GM10248 (cell line): ENCODE measurements at regions of chr7 and their contacts with region 1.

Region 1: GRCh38 chr7:69768986-69769571 is 170.8 kb downstream of the AUTS2 start:
- DNase-seq: no peak
- CTCF ChIP-seq: no peak

Region 2: GRCh38 chr7:69780377-69780776 is 11.3 kb after region 1 on chr7:
- CTCF ChIA-PET with region 1: interaction called, 14 read pairs
- POLR2A ChIA-PET with region 1: no interaction called
- DNase-seq: no peak
- CTCF ChIP-seq: no peak

Region 3: DNA sequence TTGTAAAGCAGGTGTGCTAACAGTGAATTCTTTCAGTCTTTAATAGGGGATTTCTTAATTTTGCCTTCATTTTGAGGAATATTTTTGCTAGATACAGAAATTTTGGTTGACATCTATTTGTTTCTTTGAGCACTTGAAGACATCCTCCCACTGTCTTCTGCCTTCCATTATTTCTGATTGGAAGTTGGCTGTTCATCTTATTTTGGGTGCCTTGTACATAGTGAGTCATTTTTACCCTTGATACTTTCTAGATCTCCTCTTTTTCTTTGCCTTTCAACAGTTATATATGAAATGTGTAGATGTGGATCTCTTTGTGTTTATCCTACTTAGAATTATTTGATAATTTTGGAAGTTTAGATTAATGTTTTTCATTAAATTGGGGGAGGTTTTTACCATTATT is 460.2 kb after region 1 on chr7:
- CTCF ChIA-PET with region 1: no interaction called
- POLR2A ChIA-PET with region 1: no interaction called
- DNase-seq: no peak
- CTCF ChIP-seq: no peak